Natural killer cell (primary cell): ENCODE measurements at regions of chr12 and their contacts with region 1.

Region 1: DNA sequence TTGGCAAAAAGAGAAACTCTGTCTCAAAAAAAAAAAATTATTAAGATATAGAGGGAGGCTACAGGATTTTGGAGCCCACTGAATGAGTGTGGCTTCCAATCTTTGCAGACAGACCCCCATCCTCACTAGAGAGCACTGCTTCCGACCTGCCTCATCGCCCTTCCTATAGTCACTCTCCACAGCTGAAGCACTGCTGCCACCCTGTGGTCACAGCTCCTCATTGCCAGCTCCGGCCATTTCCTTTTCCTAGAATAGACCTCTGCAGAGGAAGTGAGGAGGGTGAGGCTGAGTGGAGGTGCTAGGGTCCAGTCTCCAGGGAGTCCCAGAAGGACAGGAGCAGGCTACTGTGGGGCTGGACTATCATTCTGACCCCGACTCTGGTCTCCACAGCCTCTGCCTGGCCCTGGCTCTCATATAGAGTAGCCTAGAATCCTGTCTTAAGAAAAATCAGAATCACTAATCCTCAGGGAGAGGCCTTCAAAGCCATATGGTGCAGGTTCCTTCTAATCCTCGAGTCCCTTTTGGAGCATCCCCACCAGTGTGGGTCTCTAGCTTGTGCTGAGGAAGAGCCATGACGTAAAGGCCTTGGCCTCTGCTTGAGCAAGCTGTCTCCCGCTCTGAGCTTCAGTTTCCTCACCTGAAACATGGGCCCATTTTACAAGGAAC is 1.4 kb upstream of the NPFF start:
- DNase-seq: peak; percentile 81 to 89
- ATAC-seq: peak; percentile 96 to 100 (median 99)
- H3K4me3 ChIP-seq: no peak overlapping the region
- H3K4me3 Mint-ChIP-seq: no peak overlapping the region
- H3K27ac ChIP-seq: peak overlapping the region; percentile 41
- H3K27ac Mint-ChIP-seq: peak overlapping the region; percentile 56 to 74
- H3K4me1 ChIP-seq: peaks cover 9% of the 10 kb centered on the region
- H3K4me1 Mint-ChIP-seq: peaks cover 6% of the 10 kb centered on the region in 2 donors
- H3K27me3 ChIP-seq: no peaks in the 10 kb centered on the region
- H3K27me3 Mint-ChIP-seq: no peaks in the 10 kb centered on the region
- CTCF ChIP-seq: peak; percentile 87

Region 2: GRCh38 chr12:53352331-53353256 is 156.1 kb before region 1 on chr12:
- intact Hi-C with region 1: loop called (anchors 1 kb)
- DNase-seq: peak; percentile 79 to 96
- ATAC-seq: peak; percentile 98 to 100 (median 99)
- H3K4me3 ChIP-seq: no peak overlapping the region
- H3K4me3 Mint-ChIP-seq: no peak overlapping the region
- H3K27ac ChIP-seq: no peak overlapping the region
- H3K27ac Mint-ChIP-seq: peak overlapping the region in 1 of 2 donors; percentile 68
- H3K4me1 ChIP-seq: peaks cover 2% of the 10 kb centered on the region
- H3K4me1 Mint-ChIP-seq: peaks cover 7 to 8% of the 10 kb centered on the region in 2 donors
- H3K27me3 ChIP-seq: no peaks in the 10 kb centered on the region
- H3K27me3 Mint-ChIP-seq: no peaks in the 10 kb centered on the region
- CTCF ChIP-seq: peak; percentile 72

Region 3: DNA sequence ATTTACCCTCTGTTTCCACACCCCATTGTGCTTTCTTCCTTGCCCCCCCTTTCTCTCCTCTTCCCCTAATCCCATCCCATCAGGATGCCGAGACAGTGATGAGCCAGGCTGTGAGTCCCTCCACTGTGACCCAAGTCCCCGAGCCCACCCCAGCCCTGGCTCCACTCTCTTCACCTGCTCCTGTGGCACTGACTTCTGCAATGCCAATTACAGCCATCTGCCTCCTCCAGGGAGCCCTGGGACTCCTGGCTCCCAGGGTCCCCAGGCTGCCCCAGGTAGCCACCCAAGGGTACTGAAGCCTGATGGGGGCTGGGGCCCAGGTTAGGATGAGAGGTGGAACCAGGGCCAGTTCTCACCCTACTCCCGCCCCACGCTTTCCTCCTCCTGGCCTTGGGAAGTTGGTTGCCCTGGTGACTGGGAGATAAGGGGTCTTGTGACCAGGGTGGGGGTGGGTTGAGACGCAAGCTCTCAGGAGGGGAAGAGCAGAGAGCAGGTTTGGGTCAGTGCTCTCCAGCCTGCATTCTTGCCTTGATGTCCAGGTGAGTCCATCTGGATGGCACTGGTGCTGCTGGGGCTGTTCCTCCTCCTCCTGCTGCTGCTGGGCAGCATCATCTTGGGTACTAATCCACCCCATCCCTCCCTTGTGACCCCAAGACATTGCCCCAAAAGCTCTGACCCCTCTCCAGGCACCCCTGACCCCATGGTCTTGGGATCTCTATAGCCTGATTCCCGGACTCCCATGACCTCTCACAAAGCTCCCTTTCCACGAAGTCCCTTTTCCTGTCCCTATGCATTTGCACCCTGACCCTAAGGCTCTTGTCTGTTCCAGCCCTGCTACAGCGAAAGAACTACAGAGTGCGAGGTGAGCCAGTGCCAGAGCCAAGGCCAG is 83.8 kb before region 1 on chr12:
- intact Hi-C with region 1: loop called (anchors 1 kb)
- DNase-seq: no peak
- ATAC-seq: no peak
- H3K4me3 ChIP-seq: no peak overlapping the region
- H3K4me3 Mint-ChIP-seq: no peak overlapping the region
- H3K27ac ChIP-seq: no peak overlapping the region
- H3K27ac Mint-ChIP-seq: no peak overlapping the region
- H3K4me1 ChIP-seq: peaks cover 4% of the 10 kb centered on the region
- H3K4me1 Mint-ChIP-seq: peaks cover 0 to 6% of the 10 kb centered on the region in 2 donors
- H3K27me3 ChIP-seq: no peaks in the 10 kb centered on the region
- H3K27me3 Mint-ChIP-seq: no peaks in the 10 kb centered on the region
- CTCF ChIP-seq: no peak

Region 4: DNA sequence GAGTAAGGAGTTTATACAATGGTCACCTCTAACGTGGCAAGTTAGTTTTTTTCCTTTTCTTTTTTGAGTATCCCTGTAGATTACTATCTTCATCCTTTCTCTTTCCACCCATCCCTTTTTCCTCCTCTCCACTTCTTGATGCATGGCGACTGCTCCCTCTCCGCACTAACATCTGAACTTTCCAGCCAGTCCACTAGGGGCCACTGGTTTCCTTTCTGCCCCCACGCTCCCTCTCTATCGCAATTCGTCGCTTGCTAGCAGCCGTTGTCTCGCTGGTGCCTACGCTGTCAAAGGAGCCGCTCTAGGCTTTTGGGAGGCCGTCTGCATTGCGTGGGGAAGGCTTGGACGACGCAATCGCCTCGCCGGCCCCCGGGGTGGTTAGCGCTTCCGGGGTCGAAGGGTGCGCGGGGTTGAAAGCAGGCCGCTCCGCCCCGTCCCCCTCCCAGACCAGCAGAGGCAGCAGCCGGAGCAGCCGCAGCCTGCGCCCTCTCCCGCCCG is 57.0 kb before region 1 on chr12 and contains the start of gene PCBP2:
- intact Hi-C with region 1: loop called (anchors 2 kb)
- DNase-seq: peak; percentile 93 to 99
- ATAC-seq: peak; percentile 89 to 96 (median 90)
- H3K4me3 ChIP-seq: peak within 1 kb of the TSS; percentile 97
- H3K4me3 Mint-ChIP-seq: peak within 1 kb of the TSS; percentile 88
- H3K27ac ChIP-seq: peak within 1 kb of the TSS; percentile 95
- H3K27ac Mint-ChIP-seq: peak within 1 kb of the TSS; percentile 81 to 86
- H3K4me1 ChIP-seq: peaks cover 4% of the 10 kb centered on the region
- H3K4me1 Mint-ChIP-seq: peaks cover 34 to 39% of the 10 kb centered on the region in 2 donors
- H3K27me3 ChIP-seq: no peaks in the 10 kb centered on the region
- H3K27me3 Mint-ChIP-seq: no peaks in the 10 kb centered on the region
- CTCF ChIP-seq: peak; percentile 85
- total RNA-seq, gene PCBP2: 910 to 1,083 (median 943) TPM